ENCODE measurements at regions of chr1 and their contacts with region 1.

Region 1: GRCh38 chr1:203769505-203770343 is 4.7 kb downstream of the LAX1 start:
- DNase-seq: no peak
- H3K4me3 Mint-ChIP-seq: no peak overlapping the region
- H3K27ac Mint-ChIP-seq: peak overlapping the region; percentile 51
- H3K4me1 Mint-ChIP-seq: peaks cover 27% of the 10 kb centered on the region
- H3K27me3 Mint-ChIP-seq: no peaks in the 10 kb centered on the region

Region 2: DNA sequence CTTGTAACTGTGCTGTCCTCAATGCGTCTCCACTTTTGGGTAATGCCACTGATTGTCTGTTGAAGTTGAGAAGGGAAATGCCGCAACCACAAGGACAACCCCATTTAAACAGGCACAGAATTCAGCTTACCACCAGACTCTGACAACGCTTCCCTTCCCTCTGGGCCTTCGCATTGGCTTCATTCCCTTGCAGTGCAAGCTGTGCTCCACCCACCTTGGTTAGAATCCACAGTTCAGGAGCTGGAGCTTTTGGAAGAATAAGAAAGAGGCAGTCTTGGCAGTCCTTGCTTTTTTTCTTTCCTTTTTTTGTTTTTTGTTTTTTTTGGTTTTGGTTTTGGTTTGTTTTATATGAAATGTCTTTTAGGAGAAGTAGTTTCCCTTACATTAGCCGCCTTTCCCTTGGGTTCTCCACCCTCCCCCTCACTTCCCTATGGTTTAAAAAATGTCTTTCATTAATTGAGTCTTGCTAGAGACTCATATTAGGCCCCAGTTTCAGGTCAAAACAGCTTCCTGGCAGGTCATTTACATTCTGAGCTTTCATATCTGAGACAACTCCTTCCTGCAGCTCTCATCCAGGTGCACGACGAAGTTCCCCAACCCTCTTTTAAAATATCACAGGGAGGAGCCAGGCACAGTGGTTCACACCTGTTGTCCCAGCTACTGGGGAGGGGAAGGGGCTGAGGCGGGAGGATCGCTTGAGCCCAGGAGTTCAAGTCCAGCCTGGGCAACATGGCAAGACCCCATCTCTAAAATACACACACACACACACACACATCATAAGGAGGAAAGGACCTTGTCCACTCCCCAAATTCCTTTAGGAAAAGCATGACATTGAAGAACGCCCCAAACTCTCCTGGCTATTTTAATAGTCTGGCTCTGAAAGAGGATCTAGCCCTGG is 25.4 kb before region 1 on chr1:
- intact Hi-C with region 1: loop called (anchors 1 kb)
- DNase-seq: peak; percentile 80
- H3K4me3 Mint-ChIP-seq: peak overlapping the region; percentile 65
- H3K27ac Mint-ChIP-seq: peak overlapping the region; percentile 85
- H3K4me1 Mint-ChIP-seq: peaks cover 21% of the 10 kb centered on the region
- H3K27me3 Mint-ChIP-seq: no peaks in the 10 kb centered on the region

Region 3: DNA sequence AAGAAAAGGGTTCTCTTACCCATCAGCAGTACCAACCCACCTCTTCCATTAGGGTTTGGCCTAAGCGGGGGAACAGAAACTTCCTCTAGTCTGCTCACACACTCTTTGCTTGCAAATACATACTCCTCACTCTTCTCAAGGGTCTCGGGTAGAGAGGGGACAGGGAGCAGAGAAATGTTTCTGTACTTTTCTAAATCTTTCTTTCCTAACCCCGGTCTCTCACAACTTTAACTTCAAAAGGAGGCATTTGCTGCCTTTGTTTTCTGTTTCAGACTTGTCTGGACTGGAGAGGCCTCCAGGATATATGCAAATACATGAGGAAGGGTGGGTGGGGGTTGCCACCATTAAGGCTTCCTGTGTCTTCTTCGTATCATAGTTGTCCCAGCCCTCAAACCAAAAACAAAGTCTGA is 15.3 kb before region 1 on chr1:
- intact Hi-C with region 1: loop called (anchors 1 kb)
- DNase-seq: peak; percentile 69
- H3K4me3 Mint-ChIP-seq: peak overlapping the region; percentile 72
- H3K27ac Mint-ChIP-seq: peak overlapping the region; percentile 94
- H3K4me1 Mint-ChIP-seq: peaks cover 24% of the 10 kb centered on the region
- H3K27me3 Mint-ChIP-seq: no peaks in the 10 kb centered on the region